MCF 10A (cell line): ENCODE measurements at regions of chr1 and their contacts with region 1.

Region 1: GRCh38 chr1:111990878-111991718 is 1.6 kb upstream of the KCND3 start:
- DNase-seq: peak; percentile 59
- H3K4me3 Mint-ChIP-seq: peak overlapping the region; percentile 76
- H3K27ac Mint-ChIP-seq: no peak overlapping the region
- H3K4me1 Mint-ChIP-seq: peaks cover 17% of the 10 kb centered on the region
- H3K27me3 Mint-ChIP-seq: peaks cover 56% of the 10 kb centered on the region
- CTCF ChIP-seq: peak; percentile 34

Region 2: GRCh38 chr1:111789666-111790316 is 201.3 kb before region 1 on chr1:
- CTCF ChIA-PET with region 1: interaction called, 32 read pairs
- POLR2A ChIA-PET with region 1: no interaction called
- intact Hi-C with region 1: no loop called
- DNase-seq: peak; percentile 27
- H3K4me3 Mint-ChIP-seq: no peak overlapping the region
- H3K27ac Mint-ChIP-seq: no peak overlapping the region
- H3K4me1 Mint-ChIP-seq: no peaks in the 10 kb centered on the region
- H3K27me3 Mint-ChIP-seq: peaks cover 71% of the 10 kb centered on the region
- CTCF ChIP-seq: peak; percentile 9